ENCODE measurements at regions of chr12 and their contacts with region 1.

Region 1: DNA sequence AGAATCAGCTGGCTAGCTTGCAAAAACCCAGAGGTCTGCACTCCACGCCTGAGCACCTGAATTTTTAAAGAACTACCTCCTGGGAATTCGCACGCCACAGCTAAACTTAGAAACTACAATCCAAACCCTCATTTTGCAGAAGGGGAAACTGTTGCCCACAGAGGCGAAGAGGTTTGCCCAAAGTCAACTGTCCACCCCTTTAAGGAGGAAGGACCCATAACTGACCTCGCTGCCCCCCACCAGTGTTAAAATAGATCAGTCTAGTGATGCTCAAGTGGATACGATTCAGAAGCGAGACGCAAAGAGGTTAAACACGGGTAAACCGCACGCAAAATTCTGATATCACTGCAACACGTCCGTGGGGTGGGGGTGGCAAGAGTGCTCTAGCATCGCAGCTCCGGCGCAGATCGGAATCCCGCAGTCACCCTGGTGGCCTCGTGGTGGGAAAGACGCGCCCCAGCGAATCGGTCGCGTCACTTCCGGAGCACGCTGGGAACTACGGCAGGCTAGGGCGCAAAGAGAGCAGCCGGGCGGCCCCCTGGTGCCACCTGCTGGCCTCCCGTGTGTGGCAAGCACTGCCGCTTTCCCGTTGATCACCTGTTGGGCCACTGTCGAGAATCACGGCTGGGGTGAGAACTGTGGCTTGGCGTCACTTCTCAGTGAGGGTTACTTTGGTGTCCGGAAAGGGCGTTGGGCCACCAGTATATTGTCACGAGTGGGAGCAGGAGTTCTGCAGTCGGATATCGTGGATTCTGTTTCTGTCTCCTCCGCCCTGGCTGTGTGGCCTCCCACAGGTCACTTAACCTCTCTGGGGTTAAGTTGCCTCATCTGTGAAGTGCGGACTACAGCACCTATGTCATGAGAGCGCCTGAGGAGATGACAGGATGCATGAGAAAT is at the start of gene ALKBH2:
- DNase-seq: peak; percentile 97
- ATAC-seq: peak; percentile 74
- H3K4me3 Mint-ChIP-seq: peak within 1 kb of the TSS; percentile 86
- H3K27ac Mint-ChIP-seq: peak within 1 kb of the TSS; percentile 90
- H3K4me1 Mint-ChIP-seq: peaks cover 30% of the 10 kb centered on the region
- H3K27me3 Mint-ChIP-seq: no peaks in the 10 kb centered on the region
- total RNA-seq, gene ALKBH2: 32.1 to 33.3 TPM

Region 2: GRCh38 chr12:107685360-107686248 is 1407.7 kb before region 1 on chr12 and contains the start of gene PWP1:
- CTCF ChIA-PET with region 1: no interaction called
- POLR2A ChIA-PET with region 1: no interaction called
- intact Hi-C with region 1: loop called in 1 of 2 experiments (anchors 10 kb)
- DNase-seq: peak; percentile 97
- ATAC-seq: peak; percentile 92
- H3K4me3 Mint-ChIP-seq: peak within 1 kb of the TSS; percentile 94
- H3K27ac Mint-ChIP-seq: peak within 1 kb of the TSS; percentile 94
- H3K4me1 Mint-ChIP-seq: peaks cover 27% of the 10 kb centered on the region
- H3K27me3 Mint-ChIP-seq: no peaks in the 10 kb centered on the region
- total RNA-seq, gene PWP1: 59.5 to 60.0 TPM

Region 3: GRCh38 chr12:108633534-108634248 is 459.6 kb before region 1 on chr12 and contains the start of gene SELPLG:
- CTCF ChIA-PET with region 1: no interaction called
- POLR2A ChIA-PET with region 1: no interaction called
- intact Hi-C with region 1: loop called in 1 of 2 experiments (anchors 2 kb)
- DNase-seq: peak; percentile 92
- ATAC-seq: peak; percentile 53
- H3K4me3 Mint-ChIP-seq: peak within 1 kb of the TSS; percentile 81
- H3K27ac Mint-ChIP-seq: peak within 1 kb of the TSS; percentile 99
- H3K4me1 Mint-ChIP-seq: peaks cover 61% of the 10 kb centered on the region
- H3K27me3 Mint-ChIP-seq: no peaks in the 10 kb centered on the region
- total RNA-seq, gene SELPLG: 31.0 to 36.9 TPM

Region 4: GRCh38 chr12:108803428-108804105 is 289.7 kb before region 1 on chr12:
- CTCF ChIA-PET with region 1: no interaction called
- POLR2A ChIA-PET with region 1: no interaction called
- intact Hi-C with region 1: loop called (anchors 1 to 10 kb)
- DNase-seq: peak; percentile 80
- ATAC-seq: peak; percentile 91
- H3K4me3 Mint-ChIP-seq: no peak overlapping the region
- H3K27ac Mint-ChIP-seq: peak overlapping the region; percentile 37
- H3K4me1 Mint-ChIP-seq: peaks cover 6% of the 10 kb centered on the region
- H3K27me3 Mint-ChIP-seq: no peaks in the 10 kb centered on the region

Region 5: DNA sequence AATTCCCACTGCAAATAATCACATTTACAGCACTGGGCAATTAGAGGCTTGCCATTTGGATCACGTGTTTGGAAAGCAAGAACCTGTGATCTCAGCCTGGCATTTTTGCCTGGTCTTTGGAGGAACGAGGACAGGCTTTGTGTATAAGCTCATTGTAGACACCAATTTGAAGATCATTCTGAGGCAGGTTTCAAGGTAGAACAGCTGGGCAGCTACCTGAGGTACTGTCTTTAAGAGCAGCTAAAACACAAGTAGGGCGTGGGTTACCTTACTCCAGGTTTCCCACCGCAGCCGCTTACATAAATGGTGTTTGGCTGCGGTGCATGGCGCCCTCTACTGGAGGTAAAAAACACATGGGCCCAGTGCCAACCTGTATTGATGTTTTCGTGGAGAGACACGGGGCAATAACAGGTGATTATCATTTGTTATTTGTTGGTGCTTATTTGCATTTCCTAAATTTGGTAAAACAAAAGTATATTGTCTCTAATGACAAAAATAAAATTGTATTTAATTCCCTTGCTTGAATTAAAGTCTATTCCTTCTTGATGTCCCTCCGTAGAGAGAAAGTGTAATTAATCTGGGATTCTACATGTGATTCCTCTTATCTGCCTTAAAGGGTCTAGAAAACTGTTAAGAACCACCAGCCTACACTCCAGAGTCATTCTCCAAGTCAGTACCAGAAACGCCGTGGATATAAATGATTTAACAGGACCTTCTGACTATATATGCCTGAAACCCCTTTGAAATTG is 142.1 kb before region 1 on chr12:
- CTCF ChIA-PET with region 1: interaction called, 9 read pairs
- POLR2A ChIA-PET with region 1: no interaction called
- intact Hi-C with region 1: loop called (anchors 1 to 5 kb)
- DNase-seq: peak; percentile 83
- ATAC-seq: peak; percentile 84
- H3K4me3 Mint-ChIP-seq: no peak overlapping the region
- H3K27ac Mint-ChIP-seq: no peak overlapping the region
- H3K4me1 Mint-ChIP-seq: peaks cover 2% of the 10 kb centered on the region
- H3K27me3 Mint-ChIP-seq: peaks cover 8% of the 10 kb centered on the region

Region 6: GRCh38 chr12:109154451-109155438 is 61.5 kb after region 1 on chr12:
- CTCF ChIA-PET with region 1: no interaction called
- POLR2A ChIA-PET with region 1: no interaction called
- intact Hi-C with region 1: loop called (anchors 1 to 2 kb)
- DNase-seq: peak; percentile 93
- ATAC-seq: peak; percentile 94
- H3K4me3 Mint-ChIP-seq: peak overlapping the region; percentile 82
- H3K27ac Mint-ChIP-seq: peak overlapping the region; percentile 85
- H3K4me1 Mint-ChIP-seq: peaks cover 17% of the 10 kb centered on the region
- H3K27me3 Mint-ChIP-seq: peaks cover 1% of the 10 kb centered on the region

Measured in activated CD4-positive, alpha-beta T cell treated with anti-CD3 and anti-CD28 coated beads for 36 hours (primary cell).